Caki2 (cell line): ENCODE measurements at regions of chr9 and their contacts with region 1.

Region 1: GRCh38 chr9:134024828-134025605 is at the start of gene BRD3OS:
- DNase-seq: peak; percentile 98
- total RNA-seq, gene BRD3OS: 27.1 and 30.5 TPM in 2 replicates

Region 2: GRCh38 chr9:133742849-133743444 is 282.1 kb before region 1 on chr9:
- in situ Hi-C with region 1: no loop called
- DNase-seq: peak; percentile 65

Region 3: GRCh38 chr9:133792721-133793470 is 232.1 kb before region 1 on chr9:
- in situ Hi-C with region 1: loop called (anchors 25 kb)
- DNase-seq: peak; percentile 60

Region 4: GRCh38 chr9:134111064-134111463 is 86.0 kb after region 1 on chr9:
- in situ Hi-C with region 1: no loop called
- DNase-seq: no peak

Region 5: GRCh38 chr9:134253606-134254198 is 228.7 kb after region 1 on chr9:
- in situ Hi-C with region 1: no loop called
- DNase-seq: no peak